ENCODE measurements at regions of chr18 and their contacts with region 1.

Region 1: GRCh38 chr18:12038639-12039417 is 54.8 kb upstream of the ANKRD62 start:
- DNase-seq: peak; percentile 85
- ATAC-seq: peak; percentile 97
- H3K4me3 ChIP-seq: peak overlapping the region in 4 of 5 experiments; percentile 49 to 67 (median 56)
- H3K4me3 Mint-ChIP-seq: peak overlapping the region; percentile 82
- H3K27ac ChIP-seq: no peak overlapping the region
- H3K27ac Mint-ChIP-seq: no peak overlapping the region
- H3K4me1 ChIP-seq: peaks cover 15 to 20% of the 10 kb centered on the region in 2 donors
- H3K4me1 Mint-ChIP-seq: peaks cover 24% of the 10 kb centered on the region
- H3K27me3 ChIP-seq: peaks cover 0 to 13% (median 2%) of the 10 kb centered on the region in 4 experiments
- H3K27me3 Mint-ChIP-seq: peaks cover 3% of the 10 kb centered on the region
- CTCF ChIP-seq: peak; percentile 99

Region 2: DNA sequence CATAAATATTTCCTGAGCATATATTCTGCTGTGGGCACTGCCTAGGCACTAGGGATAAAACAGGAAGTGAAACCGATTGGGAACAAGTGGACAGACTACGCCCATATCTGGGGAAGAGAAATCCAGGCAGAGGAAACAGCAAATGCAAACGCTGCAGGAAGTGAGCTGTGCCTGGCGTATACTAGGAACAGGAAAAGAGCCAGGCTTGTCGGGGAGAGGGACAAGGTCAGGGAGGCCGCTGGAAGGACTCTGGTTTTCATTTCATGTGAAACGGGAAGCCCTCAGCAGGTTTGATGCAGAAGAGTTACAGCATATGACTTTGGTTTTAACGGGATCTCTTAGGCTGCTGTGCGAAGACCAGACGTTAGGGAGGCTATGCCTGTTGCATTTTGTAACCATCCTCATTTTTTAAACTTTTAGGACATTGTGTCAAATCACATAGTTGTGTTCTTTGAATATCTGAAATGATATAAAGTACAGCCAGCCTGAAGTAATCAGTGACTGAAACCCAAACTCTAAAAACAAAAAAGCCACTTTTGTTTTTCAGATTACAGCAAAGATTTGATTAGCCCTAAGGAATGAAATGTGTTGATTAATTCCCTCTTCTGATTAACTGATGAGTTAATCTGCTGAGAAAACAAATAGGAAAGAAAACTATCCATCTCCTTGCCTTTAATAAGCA is 779.2 kb before region 1 on chr18:
- CTCF ChIA-PET with region 1: no interaction called
- POLR2A ChIA-PET with region 1: no interaction called
- intact Hi-C with region 1: no loop called
- DNase-seq: no peak
- ATAC-seq: no peak
- H3K4me3 ChIP-seq: no peak overlapping the region
- H3K4me3 Mint-ChIP-seq: no peak overlapping the region
- H3K27ac ChIP-seq: no peak overlapping the region
- H3K27ac Mint-ChIP-seq: no peak overlapping the region
- H3K4me1 ChIP-seq: no peaks in the 10 kb centered on the region
- H3K4me1 Mint-ChIP-seq: no peaks in the 10 kb centered on the region
- H3K27me3 ChIP-seq: no peaks in the 10 kb centered on the region
- H3K27me3 Mint-ChIP-seq: no peaks in the 10 kb centered on the region
- CTCF ChIP-seq: no peak

Region 3: DNA sequence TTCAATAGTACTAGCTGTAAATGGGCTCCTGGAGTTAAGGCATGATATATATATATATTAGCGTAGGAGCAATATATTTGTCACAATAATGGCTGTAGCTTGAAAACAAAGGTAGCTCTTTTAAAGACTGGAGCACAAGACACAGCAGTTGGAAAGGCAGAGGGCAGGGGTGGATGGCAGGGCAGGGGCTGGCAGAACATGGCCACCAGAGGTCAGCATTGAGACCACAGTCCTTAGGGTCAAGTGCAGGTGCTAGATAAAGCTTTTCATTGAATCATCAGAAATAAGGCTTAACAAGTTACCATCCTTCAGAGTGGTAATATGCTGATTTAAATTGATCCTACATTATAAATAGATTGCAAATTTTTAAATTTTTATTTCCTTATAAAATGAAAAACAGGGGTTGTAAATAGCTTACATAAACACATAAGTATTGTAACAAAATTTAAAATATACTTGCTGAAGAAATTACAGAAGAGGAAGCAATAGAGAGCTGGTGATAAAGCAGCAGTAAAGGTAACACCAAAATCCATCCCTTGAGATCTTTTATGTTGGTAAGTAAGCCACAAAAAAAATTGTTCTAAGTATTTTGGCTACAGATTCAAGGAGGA is 728.2 kb before region 1 on chr18:
- CTCF ChIA-PET with region 1: no interaction called
- POLR2A ChIA-PET with region 1: no interaction called
- intact Hi-C with region 1: loop called (anchors 5 kb)
- DNase-seq: peak; percentile 17
- ATAC-seq: no peak
- H3K4me3 ChIP-seq: no peak overlapping the region
- H3K4me3 Mint-ChIP-seq: no peak overlapping the region
- H3K27ac ChIP-seq: no peak overlapping the region
- H3K27ac Mint-ChIP-seq: no peak overlapping the region
- H3K4me1 ChIP-seq: no peaks in the 10 kb centered on the region
- H3K4me1 Mint-ChIP-seq: no peaks in the 10 kb centered on the region
- H3K27me3 ChIP-seq: no peaks in the 10 kb centered on the region
- H3K27me3 Mint-ChIP-seq: peaks cover 3% of the 10 kb centered on the region
- CTCF ChIP-seq: peak; percentile 44

Region 4: DNA sequence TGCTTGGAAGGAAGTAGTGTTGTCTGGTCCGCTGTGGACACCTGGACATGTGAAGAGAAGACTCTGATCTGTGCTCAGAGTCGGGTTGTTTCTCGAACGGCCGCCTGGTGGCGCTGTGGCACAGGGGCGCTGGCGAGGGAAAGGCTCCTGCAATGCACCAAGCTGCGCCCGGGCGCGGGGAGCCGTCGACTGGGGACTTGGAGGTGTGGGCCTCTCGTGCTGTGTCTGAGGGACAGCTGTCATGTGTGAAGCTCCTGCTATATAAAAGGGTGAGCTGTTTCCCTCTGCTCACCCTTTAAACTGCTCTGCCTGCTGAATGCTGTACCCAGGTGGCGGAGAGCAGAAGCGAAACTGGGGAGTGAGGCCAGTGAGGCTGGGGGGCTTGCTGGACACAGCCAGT is 305.8 kb before region 1 on chr18:
- CTCF ChIA-PET with region 1: interaction called, 54 read pairs
- POLR2A ChIA-PET with region 1: no interaction called
- intact Hi-C with region 1: loop called (anchors 1 kb)
- DNase-seq: peak; percentile 73
- ATAC-seq: peak; percentile 68
- H3K4me3 ChIP-seq: no peak overlapping the region
- H3K4me3 Mint-ChIP-seq: peak overlapping the region; percentile 26
- H3K27ac ChIP-seq: no peak overlapping the region
- H3K27ac Mint-ChIP-seq: no peak overlapping the region
- H3K4me1 ChIP-seq: peaks cover 0 to 4% of the 10 kb centered on the region in 2 donors
- H3K4me1 Mint-ChIP-seq: peaks cover 3% of the 10 kb centered on the region
- H3K27me3 ChIP-seq: peaks cover 0 to 10% (median 2%) of the 10 kb centered on the region in 4 experiments
- H3K27me3 Mint-ChIP-seq: peaks cover 46% of the 10 kb centered on the region
- CTCF ChIP-seq: peak; percentile 92

Region 5: DNA sequence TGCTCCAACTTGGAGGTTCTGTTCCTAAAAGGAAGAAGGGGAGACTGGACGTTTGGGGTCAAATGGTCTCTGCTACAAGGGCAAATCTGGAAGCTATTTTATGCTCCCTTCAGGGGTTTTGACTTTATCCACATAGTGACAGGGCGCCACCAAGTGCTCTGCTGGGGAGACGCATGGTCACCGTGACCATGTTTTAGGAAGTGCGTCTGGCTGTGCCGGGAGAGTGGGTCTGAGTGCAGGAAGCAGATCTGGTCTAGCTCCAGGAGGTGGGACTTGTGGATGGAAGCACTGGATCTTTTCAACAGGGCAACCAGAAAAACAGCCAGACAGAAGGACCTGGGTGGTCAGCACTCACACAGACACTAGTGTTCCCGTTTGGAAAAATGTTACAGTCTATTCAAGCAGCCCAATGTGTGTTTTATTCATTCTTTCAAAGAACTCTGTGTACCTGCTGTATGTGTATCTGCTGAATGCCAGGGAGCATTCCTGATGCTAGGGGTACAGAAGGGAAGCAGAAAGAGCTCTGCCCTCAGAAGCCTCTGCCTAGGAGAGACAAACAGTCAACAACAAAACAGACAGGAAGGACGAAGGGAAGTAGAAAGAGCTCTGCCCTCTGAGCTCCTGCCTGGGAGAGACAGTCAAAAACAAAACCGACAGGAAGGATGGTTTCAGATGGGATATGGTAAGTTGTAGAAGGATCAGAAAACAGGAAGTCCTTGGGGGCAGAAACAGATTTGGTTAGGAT is 43.2 kb before region 1 on chr18:
- CTCF ChIA-PET with region 1: interaction called, 19 read pairs
- POLR2A ChIA-PET with region 1: no interaction called
- intact Hi-C with region 1: no loop called
- DNase-seq: peak; percentile 74
- ATAC-seq: peak; percentile 86
- H3K4me3 ChIP-seq: no peak overlapping the region
- H3K4me3 Mint-ChIP-seq: peak overlapping the region; percentile 59
- H3K27ac ChIP-seq: no peak overlapping the region
- H3K27ac Mint-ChIP-seq: no peak overlapping the region
- H3K4me1 ChIP-seq: peaks cover 7 to 11% of the 10 kb centered on the region in 2 donors
- H3K4me1 Mint-ChIP-seq: peaks cover 12% of the 10 kb centered on the region
- H3K27me3 ChIP-seq: no peaks in the 10 kb centered on the region
- H3K27me3 Mint-ChIP-seq: no peaks in the 10 kb centered on the region
- CTCF ChIP-seq: peak; percentile 70

Region 6: DNA sequence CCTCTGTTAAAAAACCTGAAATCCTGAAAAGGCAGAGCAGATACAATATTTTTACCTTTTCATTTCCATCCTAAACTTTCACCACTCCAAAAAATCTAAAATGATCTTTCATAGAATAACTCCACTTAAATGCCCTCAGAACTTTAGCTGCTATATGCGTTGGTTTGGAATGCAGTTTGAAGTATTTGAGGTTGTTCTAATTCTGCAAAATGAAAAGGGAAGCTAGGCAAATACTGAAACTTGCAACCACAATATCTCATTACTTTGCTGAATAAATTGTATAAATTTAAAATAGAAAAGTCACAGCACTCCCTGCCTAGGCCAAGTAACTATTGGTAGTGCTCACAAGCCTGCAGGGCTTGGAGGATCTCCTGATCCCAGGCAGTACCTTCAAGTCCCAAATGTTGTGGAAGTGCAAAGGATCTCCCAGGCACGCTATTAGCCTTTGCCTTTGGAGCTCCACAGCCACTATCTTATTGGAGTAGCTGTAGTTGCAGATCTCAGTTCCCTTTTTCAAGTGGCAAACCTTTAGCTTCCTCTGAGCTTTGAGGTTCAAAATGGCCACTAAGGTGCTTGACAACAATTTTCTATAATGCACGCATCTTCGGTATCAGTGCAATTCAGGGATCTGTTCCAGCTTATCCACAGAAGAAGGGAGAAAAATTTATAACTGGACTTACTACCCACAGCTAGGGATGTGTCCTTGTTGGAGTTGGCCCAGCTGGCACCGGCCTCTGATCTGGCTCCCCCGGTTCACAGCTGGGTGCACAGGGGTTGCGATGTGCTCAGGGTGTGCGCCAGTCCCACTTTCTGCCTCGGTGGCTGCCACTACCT is 11.4 kb after region 1 on chr18:
- CTCF ChIA-PET with region 1: interaction called, 50 read pairs
- POLR2A ChIA-PET with region 1: no interaction called
- intact Hi-C with region 1: loop called (anchors 2 kb)
- DNase-seq: peak; percentile 75
- ATAC-seq: peak; percentile 89
- H3K4me3 ChIP-seq: peak overlapping the region in 3 of 5 experiments; percentile 21 to 47 (median 26)
- H3K4me3 Mint-ChIP-seq: peak overlapping the region; percentile 75
- H3K27ac ChIP-seq: peak overlapping the region; percentile 12 to 41
- H3K27ac Mint-ChIP-seq: peak overlapping the region; percentile 76
- H3K4me1 ChIP-seq: peaks cover 36 to 49% of the 10 kb centered on the region in 2 donors
- H3K4me1 Mint-ChIP-seq: peaks cover 52% of the 10 kb centered on the region
- H3K27me3 ChIP-seq: no peaks in the 10 kb centered on the region
- H3K27me3 Mint-ChIP-seq: no peaks in the 10 kb centered on the region
- CTCF ChIP-seq: no peak

Measured in B cell (primary cell).